ENCODE measurements at regions of chr11 and their contacts with region 1.

Region 1: DNA sequence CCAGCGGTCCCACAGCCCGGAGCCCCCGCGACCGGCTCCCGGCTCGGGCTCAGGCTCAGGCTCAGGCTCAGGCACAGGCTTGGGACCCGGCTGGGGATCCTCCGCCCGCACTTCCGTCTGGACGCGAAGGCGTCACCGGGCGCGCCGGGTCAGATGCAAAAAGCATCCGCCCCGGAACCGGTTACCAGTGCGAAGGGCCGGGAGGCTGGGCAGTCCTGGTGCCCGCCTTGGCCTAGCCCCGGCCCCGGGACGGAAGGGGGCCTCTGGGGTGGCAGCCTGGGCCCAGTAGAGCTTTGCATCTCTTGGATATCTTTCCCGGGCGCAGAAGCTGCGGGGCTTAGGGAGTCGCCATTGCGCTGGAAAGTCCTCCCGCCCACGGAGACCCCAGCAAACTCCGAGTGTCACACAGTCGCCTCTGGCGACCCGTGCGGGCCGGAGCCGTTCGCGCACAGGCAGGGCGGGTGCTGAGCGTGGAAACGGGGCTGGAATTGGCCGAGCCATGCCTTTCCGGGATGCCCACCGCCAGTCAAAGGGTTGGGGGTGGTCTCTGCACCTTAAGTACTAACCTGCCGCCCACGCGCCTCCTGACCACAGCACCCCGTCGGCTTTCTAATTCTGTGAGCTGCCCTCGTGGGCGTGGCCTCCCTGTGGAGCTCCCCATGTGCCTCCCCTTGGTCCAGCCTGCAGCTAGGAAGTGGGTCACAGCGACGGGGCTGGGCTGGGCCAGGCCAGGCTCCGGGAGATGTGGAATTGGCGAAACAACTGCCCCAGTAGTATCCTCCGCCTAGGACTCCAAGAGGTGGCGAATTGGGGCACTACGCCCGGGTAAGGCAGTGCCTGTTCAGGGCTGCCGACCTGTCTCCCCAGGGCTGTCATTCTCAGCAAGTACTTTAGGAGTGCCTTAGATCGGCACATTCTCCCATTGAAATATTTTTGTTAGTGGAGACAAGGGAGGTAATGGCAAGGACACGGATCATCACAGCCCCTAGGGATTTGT is at the start of gene TMEM9B:
- DNase-seq: peak; percentile 90
- ATAC-seq: peak; percentile 87
- H3K4me3 ChIP-seq: peak within 1 kb of the TSS; percentile 93
- H3K27ac ChIP-seq: peak within 1 kb of the TSS; percentile 89
- H3K4me1 ChIP-seq: peaks cover 25% of the 10 kb centered on the region
- H3K27me3 ChIP-seq: no peaks in the 10 kb centered on the region
- CTCF ChIP-seq: no peak
- total RNA-seq, gene TMEM9B: 32.0 and 42.1 TPM in 2 replicates

Region 2: GRCh38 chr11:8813658-8814057 is 151.0 kb before region 1 on chr11:
- CTCF ChIA-PET with region 1: interaction called, 4 read pairs
- POLR2A ChIA-PET with region 1: interaction called, 5 read pairs
- intact Hi-C with region 1: loop called (anchors 5 kb)
- DNase-seq: peak; percentile 79
- ATAC-seq: peak; percentile 58
- H3K4me3 ChIP-seq: no peak overlapping the region
- H3K27ac ChIP-seq: peak overlapping the region; percentile 53
- H3K4me1 ChIP-seq: peaks cover 30% of the 10 kb centered on the region
- H3K27me3 ChIP-seq: no peaks in the 10 kb centered on the region
- CTCF ChIP-seq: peak; percentile 88

Region 3: GRCh38 chr11:8870411-8871170 is 94.0 kb before region 1 on chr11:
- CTCF ChIA-PET with region 1: no interaction called
- POLR2A ChIA-PET with region 1: no interaction called
- intact Hi-C with region 1: loop called (anchors 5 kb)
- DNase-seq: peak; percentile 54
- ATAC-seq: peak; percentile 79
- H3K4me3 ChIP-seq: peak overlapping the region; percentile 81
- H3K27ac ChIP-seq: no peak overlapping the region
- H3K4me1 ChIP-seq: no peaks in the 10 kb centered on the region
- H3K27me3 ChIP-seq: no peaks in the 10 kb centered on the region
- CTCF ChIP-seq: 0 out of 2 replicates have a peak, but pooled peaks have one; percentile 15

Region 4: DNA sequence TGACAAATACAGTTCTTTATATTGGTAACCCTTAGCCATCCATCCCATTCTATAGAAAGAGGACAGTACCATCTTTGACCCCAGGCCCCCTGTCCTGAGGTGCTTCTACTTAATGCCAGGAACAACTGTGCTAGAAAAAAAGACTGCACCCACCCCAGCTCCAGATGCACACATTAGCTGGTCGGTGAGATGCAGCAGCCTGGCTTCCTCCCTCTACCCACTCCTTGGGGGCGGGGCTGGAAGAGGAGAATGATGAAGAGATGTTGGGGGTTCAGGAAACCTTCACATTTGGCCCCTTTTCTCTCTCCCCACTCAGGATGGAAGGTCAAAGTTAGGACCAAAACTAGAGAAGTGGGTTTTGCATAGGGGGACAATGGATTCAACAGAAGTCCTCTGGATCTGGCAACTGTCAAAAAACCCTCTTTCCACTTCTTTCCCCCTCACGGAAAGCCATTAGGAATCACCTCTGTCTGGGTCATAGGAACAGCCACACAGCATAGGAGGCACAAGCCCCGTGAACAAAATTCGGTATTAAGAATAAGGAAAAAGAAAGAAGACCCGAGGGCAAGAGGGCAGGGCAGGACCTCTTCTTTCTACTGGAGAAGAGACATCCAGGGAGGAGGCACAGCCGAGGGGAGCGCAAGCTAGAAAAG is 38.4 kb after region 1 on chr11:
- CTCF ChIA-PET with region 1: no interaction called
- POLR2A ChIA-PET with region 1: interaction called, 21 read pairs
- intact Hi-C with region 1: no loop called
- DNase-seq: no peak
- ATAC-seq: no peak
- H3K4me3 ChIP-seq: no peak overlapping the region
- H3K27ac ChIP-seq: no peak overlapping the region
- H3K4me1 ChIP-seq: peaks cover 9% of the 10 kb centered on the region; the same call in 1 of the 2 replicates
- H3K27me3 ChIP-seq: no peaks in the 10 kb centered on the region
- CTCF ChIP-seq: no peak

Region 5: GRCh38 chr11:9137293-9138132 is 172.9 kb after region 1 on chr11:
- CTCF ChIA-PET with region 1: interaction called, 8 read pairs
- POLR2A ChIA-PET with region 1: no interaction called
- intact Hi-C with region 1: loop called (anchors 5 kb)
- DNase-seq: peak; percentile 72
- ATAC-seq: peak; percentile 64
- H3K4me3 ChIP-seq: no peak overlapping the region
- H3K27ac ChIP-seq: no peak overlapping the region
- H3K4me1 ChIP-seq: peaks cover 27% of the 10 kb centered on the region
- H3K27me3 ChIP-seq: no peaks in the 10 kb centered on the region
- CTCF ChIP-seq: peak; percentile 94

Region 6: GRCh38 chr11:10893714-10894151 is 1929.1 kb after region 1 on chr11:
- CTCF ChIA-PET with region 1: no interaction called
- POLR2A ChIA-PET with region 1: no interaction called
- intact Hi-C with region 1: no loop called
- DNase-seq: peak; percentile 65
- ATAC-seq: peak; percentile 27; the same call in 1 of the 2 replicates
- H3K4me3 ChIP-seq: no peak overlapping the region
- H3K27ac ChIP-seq: peak overlapping the region; percentile 17
- H3K4me1 ChIP-seq: peaks cover 24% of the 10 kb centered on the region
- H3K27me3 ChIP-seq: no peaks in the 10 kb centered on the region
- CTCF ChIP-seq: peak; percentile 39

Measured in PC-3 (cell line).